Vagina (tissue), 2 donors: ENCODE measurements at regions of chr12 and their contacts with region 1.

Region 1: GRCh38 chr12:51341259-51342007 is 5.0 kb downstream of the CELA1 start:
- DNase-seq: no peak
- H3K4me3 ChIP-seq: peak overlapping the region in 1 of 2 donors; percentile 26
- H3K27ac ChIP-seq: no peak overlapping the region
- H3K4me1 ChIP-seq: peaks cover 3% of the 10 kb centered on the region
- H3K27me3 ChIP-seq: no peaks in the 10 kb centered on the region
- CTCF ChIP-seq: peak; percentile 90 to 98 (median 98)
- POLR2A ChIP-seq: no peak

Region 2: GRCh38 chr12:50825372-50825838 is 516.0 kb before region 1 on chr12:
- intact Hi-C with region 1: loop called (anchors 10 kb)
- DNase-seq: no peak
- H3K4me3 ChIP-seq: no peak overlapping the region
- H3K27ac ChIP-seq: peak overlapping the region; percentile 78
- H3K4me1 ChIP-seq: peaks cover 15% of the 10 kb centered on the region
- H3K27me3 ChIP-seq: no peaks in the 10 kb centered on the region
- CTCF ChIP-seq: peak; percentile 39 to 61 (median 43)
- POLR2A ChIP-seq: no peak

Region 3: DNA sequence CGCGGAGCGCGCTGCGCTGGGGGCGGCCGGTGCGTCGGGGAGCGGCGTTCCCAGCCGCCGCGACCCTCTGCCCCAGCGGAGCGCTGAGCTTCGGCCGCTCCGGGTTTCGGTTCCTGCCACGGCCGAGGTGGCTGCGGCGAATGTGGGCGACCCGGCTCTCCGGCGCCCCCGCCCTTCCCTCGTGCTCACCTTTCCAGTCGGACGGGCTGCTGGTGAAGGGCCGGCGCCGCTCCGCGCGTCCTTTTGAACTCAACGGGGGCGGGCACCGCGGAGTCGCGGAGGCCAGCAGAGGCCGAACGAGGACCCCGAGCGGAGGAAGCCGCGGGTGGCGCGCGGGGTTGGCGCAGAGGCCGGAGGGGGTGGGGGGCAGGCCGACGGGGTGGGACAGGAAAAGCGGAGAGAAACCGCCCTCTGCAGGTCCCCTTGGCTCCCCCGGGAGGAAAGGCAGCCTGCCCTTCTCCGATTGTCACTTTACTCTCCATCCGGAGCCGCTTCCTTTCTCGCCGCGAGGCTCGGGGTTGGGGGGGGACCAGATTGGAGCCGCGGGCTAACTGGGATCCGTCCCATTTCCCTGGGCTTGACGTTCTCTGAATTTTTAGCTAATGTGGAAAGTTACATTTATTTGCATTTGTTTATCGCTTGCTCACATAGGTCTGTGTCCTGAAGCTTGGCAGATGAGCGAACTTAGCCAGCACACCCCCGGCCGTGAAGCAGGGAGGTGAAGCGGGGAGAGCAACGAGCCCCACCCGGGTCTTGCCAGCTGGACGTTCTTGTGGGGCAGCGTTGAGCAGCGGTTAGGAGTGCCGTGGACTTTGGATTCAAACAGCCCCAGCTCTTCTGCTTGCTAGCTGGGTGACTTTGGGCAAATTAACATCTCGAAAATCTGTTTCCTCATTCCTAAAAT is 71.1 kb before region 1 on chr12 and contains the start of gene SMAGP:
- intact Hi-C with region 1: loop called (anchors 10 kb)
- DNase-seq: no peak
- H3K4me3 ChIP-seq: peak within 1 kb of the TSS; percentile 68 to 97
- H3K27ac ChIP-seq: peak within 1 kb of the TSS; percentile 65
- H3K4me1 ChIP-seq: peaks cover 14% of the 10 kb centered on the region
- H3K27me3 ChIP-seq: no peaks in the 10 kb centered on the region
- CTCF ChIP-seq: no peak
- POLR2A ChIP-seq: no peak
- total RNA-seq, gene SMAGP: 30.0 TPM